Dorsolateral prefrontal cortex (tissue), 120 donors: ENCODE measurements at regions of chr6 and their contacts with region 1.

Region 1: DNA sequence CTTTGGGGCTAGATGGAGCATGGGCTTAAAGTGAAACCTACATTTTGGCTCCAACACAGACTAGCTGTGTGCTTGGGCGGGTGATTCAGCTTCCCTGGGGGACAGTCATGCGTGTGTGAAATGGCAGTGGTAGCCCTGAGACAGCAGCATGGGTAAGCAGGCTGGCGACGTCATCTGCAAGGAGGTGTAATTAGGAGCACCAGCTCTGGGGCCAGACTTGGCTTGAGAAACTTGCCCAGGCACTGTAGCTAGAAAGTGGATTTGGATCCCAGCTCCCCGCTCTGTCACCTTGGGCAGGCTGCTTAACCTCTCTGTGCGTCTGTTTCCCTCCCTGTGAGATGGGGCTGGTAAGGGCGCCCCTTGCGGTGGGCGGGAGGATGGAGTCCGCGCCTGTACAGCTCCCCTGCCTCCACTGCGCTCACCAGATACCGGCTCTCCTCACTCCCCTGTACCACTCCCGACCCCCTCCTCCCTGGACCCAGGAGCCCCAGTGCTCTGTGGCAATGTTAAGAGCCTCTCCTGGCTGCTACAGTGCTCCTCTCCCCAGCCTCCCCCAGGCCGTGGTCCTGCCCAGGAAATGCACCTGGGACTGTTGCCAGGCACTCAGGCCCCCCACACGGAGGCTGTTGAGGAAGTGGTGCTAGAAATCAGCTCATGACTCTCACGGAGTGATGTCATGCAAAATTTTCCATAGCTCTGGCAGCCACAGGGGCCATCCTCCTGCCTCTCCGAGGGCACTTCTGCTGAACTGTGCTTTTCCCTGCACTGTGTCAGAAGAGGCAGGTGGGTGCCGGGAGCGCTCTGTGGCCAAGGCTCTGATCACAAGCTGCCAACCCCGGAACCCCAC is 44.6 kb downstream of the SYNJ2 start:
- DNase-seq: peak in 6 of 10 donors; percentile 55 to 90 (median 73)
- H3K4me3 ChIP-seq: peak overlapping the region in 35 of 59 donors; percentile 0 to 53 (median 19)
- H3K27ac ChIP-seq: peak overlapping the region; percentile 54 to 100 (median 93)
- H3K27me3 ChIP-seq: no peaks in the 10 kb centered on the region
- CTCF ChIP-seq: peak in 46 of 56 donors; percentile 17 to 55 (median 34)

Region 2: GRCh38 chr6:157779705-157780604 is 246.3 kb before region 1 on chr6:
- intact Hi-C with region 1: no loop called
- DNase-seq: no peak
- H3K4me3 ChIP-seq: peak overlapping the region in 8 of 59 donors; percentile 10 to 40 (median 24)
- H3K27ac ChIP-seq: peak overlapping the region in 48 of 59 donors; percentile 16 to 89 (median 58)
- H3K27me3 ChIP-seq: no peaks in the 10 kb centered on the region
- CTCF ChIP-seq: no peak

Region 3: GRCh38 chr6:157981395-157982296 is 44.6 kb before region 1 on chr6 and contains the start of gene SYNJ2:
- intact Hi-C with region 1: loop called in 1 of 2 experiments (anchors 5 kb)
- DNase-seq: peak in 8 of 10 donors; percentile 56 to 85 (median 69)
- H3K4me3 ChIP-seq: peak within 1 kb of the TSS; percentile 68 to 99 (median 85)
- H3K27ac ChIP-seq: peak within 1 kb of the TSS; percentile 68 to 100 (median 92)
- H3K27me3 ChIP-seq: no peaks in the 10 kb centered on the region
- CTCF ChIP-seq: peak in 54 of 56 donors; percentile 17 to 79 (median 53)
- total RNA-seq, gene SYNJ2: 41.0 to 257 (median 86.5) TPM

Region 4: DNA sequence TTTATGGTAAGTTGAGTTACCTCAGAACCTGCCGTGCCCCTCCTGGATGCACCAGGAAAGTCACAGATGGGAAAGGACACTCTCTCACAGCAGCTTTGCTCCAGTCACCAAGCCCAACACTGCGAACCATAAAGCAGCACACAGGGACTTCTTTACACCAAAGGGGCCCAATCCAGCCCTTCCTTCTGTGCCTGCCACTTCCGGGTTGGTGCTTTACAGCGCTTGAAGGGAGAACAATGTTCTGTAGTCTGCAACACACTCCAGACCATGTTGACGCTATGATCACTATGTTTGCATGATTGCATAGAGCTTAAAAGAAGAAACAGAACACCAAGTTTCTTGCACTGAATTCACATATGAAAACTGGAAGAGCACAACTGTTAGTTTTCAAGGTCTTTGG is 84.7 kb after region 1 on chr6:
- intact Hi-C with region 1: no loop called
- DNase-seq: no peak
- H3K4me3 ChIP-seq: no peak overlapping the region
- H3K27ac ChIP-seq: peak overlapping the region in 39 of 59 donors; percentile 0 to 75 (median 34)
- H3K27me3 ChIP-seq: no peaks in the 10 kb centered on the region
- CTCF ChIP-seq: no peak

Region 5: DNA sequence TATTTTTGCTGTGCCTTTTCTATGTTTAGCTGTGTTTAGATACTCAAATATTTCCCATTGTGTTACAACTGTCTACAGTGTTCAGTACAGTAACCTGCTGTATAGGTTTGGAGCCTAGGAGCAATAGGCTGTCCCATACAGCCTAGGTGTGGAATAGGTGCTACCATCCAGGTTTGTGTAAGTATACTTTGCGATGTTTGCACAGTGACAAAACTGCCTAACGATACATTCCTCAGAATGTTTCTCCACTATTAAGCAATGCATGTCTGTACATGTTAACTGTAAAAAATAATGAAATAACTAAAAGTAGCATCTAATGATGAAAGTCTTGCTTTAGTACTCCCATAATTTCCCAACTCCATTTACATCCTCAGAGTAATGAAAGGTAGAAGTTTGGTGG is 95.8 kb after region 1 on chr6:
- intact Hi-C with region 1: no loop called
- DNase-seq: no peak
- H3K4me3 ChIP-seq: no peak overlapping the region
- H3K27ac ChIP-seq: no peak overlapping the region
- H3K27me3 ChIP-seq: no peaks in the 10 kb centered on the region
- CTCF ChIP-seq: no peak

Region 6: GRCh38 chr6:158293122-158293521 is 266.8 kb after region 1 on chr6:
- intact Hi-C with region 1: no loop called
- DNase-seq: no peak
- H3K4me3 ChIP-seq: no peak overlapping the region
- H3K27ac ChIP-seq: peak overlapping the region in 18 of 59 donors; percentile 3 to 92 (median 22)
- H3K27me3 ChIP-seq: no peaks in the 10 kb centered on the region
- CTCF ChIP-seq: no peak